ENCODE measurements at regions of chrX and their contacts with region 1.

Region 1: GRCh38 chrX:78945186-78945912 is at the start of gene P2RY10:
- DNase-seq: no peak
- ATAC-seq: peak; percentile 78
- H3K4me3 Mint-ChIP-seq: peak within 1 kb of the TSS; percentile 97
- H3K27ac Mint-ChIP-seq: peak within 1 kb of the TSS; percentile 98
- H3K4me1 Mint-ChIP-seq: peaks cover 63% of the 10 kb centered on the region
- H3K27me3 Mint-ChIP-seq: no peaks in the 10 kb centered on the region
- CTCF ChIP-seq: no peak
- total RNA-seq, gene P2RY10: 72.7 and 80.5 TPM in 2 replicates

Region 2: DNA sequence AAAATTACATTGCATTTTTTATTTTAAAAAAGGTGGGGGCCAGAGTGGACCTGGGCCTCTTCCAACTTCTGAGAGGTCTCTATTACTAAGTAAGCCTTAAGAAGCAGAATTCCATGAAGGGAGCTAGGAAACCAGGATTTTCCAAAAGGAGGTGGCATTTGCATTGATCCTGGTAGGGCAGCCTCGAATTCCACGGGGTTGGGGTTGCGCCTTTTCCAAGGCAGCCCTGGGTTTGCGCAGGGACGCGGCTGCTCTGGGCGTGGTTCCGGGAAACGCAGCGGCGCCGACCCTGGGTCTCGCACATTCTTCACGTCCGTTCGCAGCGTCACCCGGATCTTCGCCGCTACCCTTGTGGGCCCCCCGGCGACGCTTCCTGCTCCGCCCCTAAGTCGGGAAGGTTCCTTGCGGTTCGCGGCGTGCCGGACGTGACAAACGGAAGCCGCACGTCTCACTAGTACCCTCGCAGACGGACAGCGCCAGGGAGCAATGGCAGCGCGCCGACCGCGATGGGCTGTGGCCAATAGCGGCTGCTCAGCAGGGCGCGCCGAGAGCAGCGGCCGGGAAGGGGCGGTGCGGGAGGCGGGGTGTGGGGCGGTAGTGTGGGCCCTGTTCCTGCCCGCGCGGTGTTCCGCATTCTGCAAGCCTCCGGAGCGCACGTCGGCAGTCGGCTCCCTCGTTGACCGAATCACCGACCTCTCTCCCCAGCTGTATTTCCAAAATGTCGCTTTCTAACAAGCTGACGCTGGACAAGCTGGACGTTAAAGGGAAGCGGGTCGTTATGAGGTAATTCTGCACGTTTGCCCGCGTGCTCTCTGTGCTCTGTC is 841.5 kb before region 1 on chrX and contains the start of gene PGK1:
- CTCF ChIA-PET with region 1: no interaction called
- POLR2A ChIA-PET with region 1: no interaction called
- intact Hi-C with region 1: loop called (anchors 2 kb)
- DNase-seq: peak; percentile 81
- ATAC-seq: peak; percentile 95
- H3K4me3 Mint-ChIP-seq: peak within 1 kb of the TSS; percentile 87
- H3K27ac Mint-ChIP-seq: peak within 1 kb of the TSS; percentile 90
- H3K4me1 Mint-ChIP-seq: peaks cover 41% of the 10 kb centered on the region
- H3K27me3 Mint-ChIP-seq: peaks cover 2% of the 10 kb centered on the region
- CTCF ChIP-seq: no peak
- total RNA-seq, gene PGK1: 293 and 295 TPM in 2 replicates

Region 3: DNA sequence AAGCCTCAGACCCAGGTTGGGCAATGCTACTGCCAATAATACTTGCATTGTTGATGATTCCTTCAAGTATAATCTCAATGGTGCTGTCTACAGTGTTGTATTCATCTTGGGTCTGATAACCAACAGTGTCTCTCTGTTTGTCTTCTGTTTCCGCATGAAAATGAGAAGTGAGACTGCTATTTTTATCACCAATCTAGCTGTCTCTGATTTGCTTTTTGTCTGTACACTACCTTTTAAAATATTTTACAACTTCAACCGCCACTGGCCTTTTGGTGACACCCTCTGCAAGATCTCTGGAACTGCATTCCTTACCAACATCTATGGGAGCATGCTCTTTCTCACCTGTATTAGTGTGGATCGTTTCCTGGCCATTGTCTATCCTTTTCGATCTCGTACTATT is 190.4 kb before region 1 on chrX:
- CTCF ChIA-PET with region 1: no interaction called
- POLR2A ChIA-PET with region 1: interaction called, 3 read pairs
- intact Hi-C with region 1: loop called (anchors 5 kb)
- DNase-seq: no peak
- ATAC-seq: peak; percentile 85
- H3K4me3 Mint-ChIP-seq: peak overlapping the region; percentile 56
- H3K27ac Mint-ChIP-seq: peak overlapping the region; percentile 73
- H3K4me1 Mint-ChIP-seq: peaks cover 45% of the 10 kb centered on the region
- H3K27me3 Mint-ChIP-seq: no peaks in the 10 kb centered on the region
- CTCF ChIP-seq: no peak

Region 4: DNA sequence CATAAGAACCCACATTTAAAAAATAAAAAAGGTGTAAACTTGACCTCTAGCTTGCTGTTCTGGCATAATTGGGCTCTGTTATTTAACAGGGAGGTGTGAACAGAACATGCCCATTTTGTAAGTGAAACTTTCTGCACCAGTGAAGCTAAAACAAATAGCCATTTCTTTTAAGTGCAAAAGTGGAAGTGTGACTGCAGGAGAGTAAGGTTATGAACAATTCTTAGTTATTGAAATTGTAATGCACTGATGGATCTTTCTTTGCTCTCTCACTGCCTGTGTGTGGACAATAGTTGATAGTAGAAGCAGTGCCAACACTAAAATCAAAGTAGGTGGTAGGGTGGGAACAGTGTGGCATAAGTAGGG is 12.4 kb after region 1 on chrX:
- CTCF ChIA-PET with region 1: no interaction called
- POLR2A ChIA-PET with region 1: interaction called, 48 read pairs
- intact Hi-C with region 1: loop called (anchors 1 kb)
- DNase-seq: no peak
- ATAC-seq: peak; percentile 85
- H3K4me3 Mint-ChIP-seq: peak overlapping the region; percentile 67
- H3K27ac Mint-ChIP-seq: peak overlapping the region; percentile 89
- H3K4me1 Mint-ChIP-seq: peaks cover 80% of the 10 kb centered on the region
- H3K27me3 Mint-ChIP-seq: no peaks in the 10 kb centered on the region
- CTCF ChIP-seq: no peak

Region 5: DNA sequence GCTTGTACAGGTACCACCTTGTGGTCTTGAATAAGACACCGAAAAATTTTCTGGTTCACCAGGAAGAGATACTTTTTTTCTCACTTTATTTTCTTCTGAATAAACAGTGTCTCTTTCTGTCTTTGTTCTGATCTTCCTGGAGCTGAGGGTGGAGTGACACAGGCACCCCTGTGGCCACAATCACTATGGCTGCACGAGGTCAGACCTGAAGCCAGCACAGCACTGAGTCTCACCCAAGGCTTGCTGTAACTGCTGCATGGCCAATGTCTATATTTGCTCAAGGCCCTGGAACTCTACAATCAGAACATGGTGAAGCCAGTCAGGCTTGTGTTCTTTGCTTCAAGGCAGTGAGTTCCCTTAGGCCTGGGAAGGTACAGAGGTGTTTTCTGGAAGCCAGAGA is 286.3 kb after region 1 on chrX:
- CTCF ChIA-PET with region 1: no interaction called
- POLR2A ChIA-PET with region 1: no interaction called
- intact Hi-C with region 1: no loop called
- DNase-seq: no peak
- ATAC-seq: no peak
- H3K4me3 Mint-ChIP-seq: no peak overlapping the region
- H3K27ac Mint-ChIP-seq: no peak overlapping the region
- H3K4me1 Mint-ChIP-seq: peaks cover 12% of the 10 kb centered on the region
- H3K27me3 Mint-ChIP-seq: no peaks in the 10 kb centered on the region
- CTCF ChIP-seq: no peak

Region 6: DNA sequence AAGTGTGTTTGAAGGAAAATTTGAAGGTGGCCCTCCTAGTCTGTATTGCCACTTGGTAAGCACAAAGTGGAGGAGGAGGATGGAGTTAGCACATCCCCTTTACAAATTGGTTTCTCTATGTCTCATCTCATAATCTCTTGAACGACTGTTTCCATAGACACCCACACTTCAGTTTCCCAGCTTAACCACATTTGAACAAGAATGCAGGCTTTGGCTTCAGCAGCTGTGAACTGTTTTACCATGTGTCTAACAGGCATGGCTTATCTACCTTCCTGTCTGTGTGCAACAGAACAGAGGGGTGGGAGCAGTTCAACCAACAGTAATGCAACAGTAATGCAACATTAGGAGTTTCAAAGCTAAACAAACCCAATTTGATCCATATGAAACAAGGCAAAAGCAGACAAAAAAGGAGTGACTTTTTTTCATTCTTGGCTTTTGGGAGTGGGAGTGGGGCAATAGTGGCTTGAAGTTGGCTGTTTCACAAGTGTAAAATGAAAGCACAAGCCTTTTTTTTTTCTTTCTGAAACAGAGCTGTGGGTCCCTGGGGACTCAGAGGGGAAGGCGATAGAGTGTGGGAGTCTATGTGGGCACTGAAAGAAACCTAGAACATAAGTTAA is 313.8 kb after region 1 on chrX:
- CTCF ChIA-PET with region 1: no interaction called
- POLR2A ChIA-PET with region 1: interaction called, 6 read pairs
- intact Hi-C with region 1: loop called (anchors 2 kb)
- DNase-seq: no peak
- ATAC-seq: peak; percentile 83
- H3K4me3 Mint-ChIP-seq: peak overlapping the region; percentile 59
- H3K27ac Mint-ChIP-seq: peak overlapping the region; percentile 91
- H3K4me1 Mint-ChIP-seq: peaks cover 72% of the 10 kb centered on the region
- H3K27me3 Mint-ChIP-seq: no peaks in the 10 kb centered on the region
- CTCF ChIP-seq: no peak